ENCODE measurements at regions of chr18 and their contacts with region 1.

Region 1: DNA sequence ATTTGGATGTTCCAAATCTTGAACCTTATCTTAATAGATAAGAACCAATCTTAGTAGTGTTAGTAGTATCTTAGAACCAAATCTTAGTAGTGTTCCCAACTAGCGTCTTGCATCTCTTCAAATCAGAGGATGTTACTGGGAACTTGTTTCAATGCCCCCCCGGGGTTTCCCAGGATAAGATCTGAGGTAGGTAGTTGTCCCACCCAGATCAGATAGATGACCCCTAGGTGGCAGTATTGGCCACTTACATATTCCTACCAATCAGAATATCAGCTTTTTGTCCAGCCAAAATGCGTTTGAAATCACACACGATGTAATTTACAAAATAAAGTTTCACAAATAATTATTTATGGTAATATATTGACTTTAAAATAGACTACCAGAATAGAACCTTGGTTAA is 314.8 kb downstream of the MBD2 start:
- DNase-seq: peak; percentile 7 to 49
- H3K4me3 ChIP-seq: no peak overlapping the region
- H3K27ac ChIP-seq: no peak overlapping the region
- H3K4me1 ChIP-seq: no peaks in the 10 kb centered on the region; a peak in 1 of 7 replicates
- H3K27me3 ChIP-seq: peaks cover 0 to 1% (median 0%) of the 10 kb centered on the region in 4 experiments; a peak in 1 of 7 replicates
- CTCF ChIP-seq: peak in 2 of 3 experiments; percentile 46 to 64; a peak in 3 of 4 replicates
- EP300 ChIP-seq: no peak
- POLR2A ChIP-seq: no peak
- RAD21 ChIP-seq: peak; percentile 55 to 67

Region 2: GRCh38 chr18:53920312-53921075 is 10.8 kb after region 1 on chr18:
- CTCF ChIA-PET with region 1: interaction called, 18 read pairs
- POLR2A ChIA-PET with region 1: no interaction called
- DNase-seq: no peak
- H3K4me3 ChIP-seq: no peak overlapping the region
- H3K27ac ChIP-seq: no peak overlapping the region
- H3K4me1 ChIP-seq: no peaks in the 10 kb centered on the region
- H3K27me3 ChIP-seq: no peaks in the 10 kb centered on the region
- CTCF ChIP-seq: no peak
- EP300 ChIP-seq: no peak
- POLR2A ChIP-seq: no peak
- RAD21 ChIP-seq: no peak

Measured in H1 (cell line).